Naive thymus-derived CD4-positive, alpha-beta T cell (primary cell): ENCODE measurements at regions of chr5 and their contacts with region 1.

Region 1: GRCh38 chr5:111313017-111313724 is 89.0 kb downstream of the CAMK4 start:
- DNase-seq: no peak
- ATAC-seq: no peak
- H3K4me3 ChIP-seq: no peak overlapping the region
- H3K4me3 Mint-ChIP-seq: peak overlapping the region in 8 of 10 donors; percentile 3 to 38 (median 21)
- H3K27ac ChIP-seq: peak overlapping the region; percentile 38
- H3K27ac Mint-ChIP-seq: peak overlapping the region; percentile 25 to 83 (median 61)
- H3K4me1 ChIP-seq: peaks cover 9 to 38% of the 10 kb centered on the region in 2 donors
- H3K4me1 Mint-ChIP-seq: peaks cover 31 to 98% (median 90%) of the 10 kb centered on the region in 7 donors
- H3K27me3 ChIP-seq: no peaks in the 10 kb centered on the region
- H3K27me3 Mint-ChIP-seq: no peaks in the 10 kb centered on the region

Region 2: DNA sequence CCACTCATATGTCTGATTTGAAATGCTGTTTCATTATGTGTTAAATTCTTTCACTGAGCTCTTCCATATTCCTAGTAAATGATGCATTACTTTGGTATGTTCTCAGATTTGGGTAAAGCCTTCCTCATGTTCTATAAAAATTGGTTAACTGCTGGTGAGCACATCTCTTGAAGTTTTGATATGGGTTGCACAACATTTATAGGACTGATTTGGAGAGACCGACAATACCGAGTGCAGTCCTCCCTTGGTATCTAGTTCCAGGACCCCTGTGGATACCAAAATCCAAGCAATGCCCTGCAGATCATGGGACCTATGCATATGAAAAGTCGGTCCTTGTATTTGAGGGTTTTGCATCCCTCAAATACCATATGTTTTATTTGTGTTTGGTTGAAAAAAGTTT is 183.2 kb before region 1 on chr5:
- CTCF ChIA-PET with region 1: no interaction called
- POLR2A ChIA-PET with region 1: no interaction called
- intact Hi-C with region 1: no loop called
- DNase-seq: no peak
- ATAC-seq: no peak
- H3K4me3 ChIP-seq: no peak overlapping the region
- H3K4me3 Mint-ChIP-seq: no peak overlapping the region
- H3K27ac ChIP-seq: no peak overlapping the region
- H3K27ac Mint-ChIP-seq: peak overlapping the region in 1 of 9 donors; percentile 46
- H3K4me1 ChIP-seq: no peaks in the 10 kb centered on the region
- H3K4me1 Mint-ChIP-seq: peaks cover 0 to 6% (median 1%) of the 10 kb centered on the region in 7 donors
- H3K27me3 ChIP-seq: no peaks in the 10 kb centered on the region
- H3K27me3 Mint-ChIP-seq: no peaks in the 10 kb centered on the region

Region 3: DNA sequence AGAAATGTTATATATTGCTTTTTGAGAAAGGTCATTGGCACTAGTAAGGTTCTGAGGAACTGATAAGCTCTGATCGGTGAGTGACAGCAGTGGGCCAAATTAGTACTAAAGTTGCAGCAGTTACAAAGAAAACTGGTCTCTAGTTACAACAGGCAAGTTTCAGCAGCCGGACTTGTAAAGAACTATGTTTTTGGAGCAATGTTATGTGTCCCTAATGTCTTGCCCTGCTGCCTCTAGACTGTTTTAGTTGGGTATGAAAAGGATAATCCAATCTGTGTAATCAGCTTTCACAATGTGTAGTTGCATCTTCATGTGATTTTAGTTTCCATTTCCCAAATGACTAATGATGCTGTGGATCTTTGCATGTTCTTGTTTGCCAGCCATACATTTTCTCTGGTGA is 24.5 kb after region 1 on chr5:
- CTCF ChIA-PET with region 1: no interaction called
- POLR2A ChIA-PET with region 1: no interaction called
- intact Hi-C with region 1: loop called in 1 of 2 experiments (anchors 2 kb)
- DNase-seq: no peak
- ATAC-seq: no peak
- H3K4me3 ChIP-seq: no peak overlapping the region
- H3K4me3 Mint-ChIP-seq: peak overlapping the region in 8 of 10 donors; percentile 0 to 70 (median 42)
- H3K27ac ChIP-seq: no peak overlapping the region
- H3K27ac Mint-ChIP-seq: peak overlapping the region in 6 of 9 donors; percentile 18 to 72 (median 58)
- H3K4me1 ChIP-seq: peaks cover 10 to 23% of the 10 kb centered on the region in 2 donors
- H3K4me1 Mint-ChIP-seq: peaks cover 35 to 97% (median 89%) of the 10 kb centered on the region in 7 donors
- H3K27me3 ChIP-seq: no peaks in the 10 kb centered on the region
- H3K27me3 Mint-ChIP-seq: no peaks in the 10 kb centered on the region

Region 4: GRCh38 chr5:111472579-111472978 is 159.4 kb after region 1 on chr5:
- CTCF ChIA-PET with region 1: no interaction called
- POLR2A ChIA-PET with region 1: no interaction called
- intact Hi-C with region 1: no loop called
- DNase-seq: no peak
- ATAC-seq: peak; percentile 59
- H3K4me3 ChIP-seq: no peak overlapping the region
- H3K4me3 Mint-ChIP-seq: no peak overlapping the region
- H3K27ac ChIP-seq: no peak overlapping the region
- H3K27ac Mint-ChIP-seq: peak overlapping the region in 7 of 9 donors; percentile 28 to 88 (median 39)
- H3K4me1 ChIP-seq: no peaks in the 10 kb centered on the region
- H3K4me1 Mint-ChIP-seq: peaks cover 0 to 8% (median 5%) of the 10 kb centered on the region in 7 donors
- H3K27me3 ChIP-seq: no peaks in the 10 kb centered on the region
- H3K27me3 Mint-ChIP-seq: no peaks in the 10 kb centered on the region